ENCODE measurements at regions of chr3 and their contacts with region 1.

Region 1: DNA sequence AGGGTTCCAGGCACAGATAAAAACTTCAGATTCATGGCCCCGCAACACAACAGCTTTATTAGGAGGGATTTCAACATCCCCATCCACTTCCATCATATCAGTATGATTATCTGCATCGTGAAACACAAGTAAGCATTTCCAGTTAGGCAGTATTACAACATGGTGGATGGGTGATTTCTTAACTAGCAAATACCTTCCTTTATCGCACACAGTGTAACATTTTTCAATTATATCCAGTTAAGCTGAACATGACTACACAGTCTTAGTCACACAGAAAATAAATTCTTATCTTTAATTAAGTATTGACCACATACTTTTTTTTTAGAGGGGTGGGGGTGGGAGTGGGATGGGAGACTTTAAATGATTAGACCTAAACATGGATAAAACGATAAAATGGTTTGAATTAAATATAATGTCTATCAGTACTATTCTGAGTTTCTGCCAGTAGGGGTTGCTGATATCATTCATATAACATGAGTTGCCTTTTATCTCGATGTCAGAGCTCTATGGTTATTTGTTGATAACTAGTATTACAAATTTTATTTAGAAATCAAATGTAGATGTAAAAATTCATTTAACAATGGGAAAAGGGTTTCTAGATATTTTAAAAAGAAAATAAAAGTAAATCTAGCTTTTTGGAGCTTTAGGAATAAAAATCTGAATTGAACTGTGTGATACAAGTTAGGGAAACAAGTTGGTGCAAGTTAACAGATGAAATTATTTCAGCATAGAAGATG is 146.6 kb downstream of the TBL1XR1 start:
- DNase-seq: peak in 2 of 9 experiments; percentile 64 to 75
- ATAC-seq: peak; percentile 86
- H3K4me3 ChIP-seq: no peak overlapping the region
- H3K4me3 Mint-ChIP-seq: no peak overlapping the region
- H3K27ac ChIP-seq: no peak overlapping the region
- H3K27ac Mint-ChIP-seq: no peak overlapping the region
- H3K4me1 ChIP-seq: peaks cover 3% of the 10 kb centered on the region
- H3K4me1 Mint-ChIP-seq: peaks cover 20% of the 10 kb centered on the region
- H3K27me3 ChIP-seq: no peaks in the 10 kb centered on the region
- H3K27me3 Mint-ChIP-seq: no peaks in the 10 kb centered on the region
- CTCF ChIP-seq: peak; percentile 95

Region 2: DNA sequence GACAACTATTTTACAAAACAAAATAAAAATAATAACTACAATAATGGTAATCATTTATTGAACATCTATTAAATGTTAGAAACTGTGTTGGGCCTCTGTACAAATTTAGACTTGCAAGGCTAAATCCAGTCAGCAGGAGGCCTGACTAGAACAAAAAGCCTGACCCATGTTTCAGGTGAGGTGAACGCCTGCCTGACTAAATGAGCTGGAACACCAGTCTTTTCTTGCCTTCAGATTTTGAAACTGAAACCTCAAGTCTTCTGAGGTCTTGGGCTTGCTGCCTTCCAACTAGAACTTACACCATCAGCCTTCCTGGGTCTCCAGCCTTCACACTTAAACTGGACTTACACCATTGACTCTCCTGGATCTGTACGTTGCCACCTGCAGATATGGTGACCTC is 560.3 kb before region 1 on chr3:
- CTCF ChIA-PET with region 1: no interaction called
- POLR2A ChIA-PET with region 1: no interaction called
- intact Hi-C with region 1: no loop called
- DNase-seq: no peak
- ATAC-seq: no peak
- H3K4me3 ChIP-seq: no peak overlapping the region
- H3K4me3 Mint-ChIP-seq: no peak overlapping the region
- H3K27ac ChIP-seq: no peak overlapping the region
- H3K27ac Mint-ChIP-seq: no peak overlapping the region
- H3K4me1 ChIP-seq: no peaks in the 10 kb centered on the region
- H3K4me1 Mint-ChIP-seq: no peaks in the 10 kb centered on the region
- H3K27me3 ChIP-seq: no peaks in the 10 kb centered on the region
- H3K27me3 Mint-ChIP-seq: no peaks in the 10 kb centered on the region
- CTCF ChIP-seq: no peak

Region 3: DNA sequence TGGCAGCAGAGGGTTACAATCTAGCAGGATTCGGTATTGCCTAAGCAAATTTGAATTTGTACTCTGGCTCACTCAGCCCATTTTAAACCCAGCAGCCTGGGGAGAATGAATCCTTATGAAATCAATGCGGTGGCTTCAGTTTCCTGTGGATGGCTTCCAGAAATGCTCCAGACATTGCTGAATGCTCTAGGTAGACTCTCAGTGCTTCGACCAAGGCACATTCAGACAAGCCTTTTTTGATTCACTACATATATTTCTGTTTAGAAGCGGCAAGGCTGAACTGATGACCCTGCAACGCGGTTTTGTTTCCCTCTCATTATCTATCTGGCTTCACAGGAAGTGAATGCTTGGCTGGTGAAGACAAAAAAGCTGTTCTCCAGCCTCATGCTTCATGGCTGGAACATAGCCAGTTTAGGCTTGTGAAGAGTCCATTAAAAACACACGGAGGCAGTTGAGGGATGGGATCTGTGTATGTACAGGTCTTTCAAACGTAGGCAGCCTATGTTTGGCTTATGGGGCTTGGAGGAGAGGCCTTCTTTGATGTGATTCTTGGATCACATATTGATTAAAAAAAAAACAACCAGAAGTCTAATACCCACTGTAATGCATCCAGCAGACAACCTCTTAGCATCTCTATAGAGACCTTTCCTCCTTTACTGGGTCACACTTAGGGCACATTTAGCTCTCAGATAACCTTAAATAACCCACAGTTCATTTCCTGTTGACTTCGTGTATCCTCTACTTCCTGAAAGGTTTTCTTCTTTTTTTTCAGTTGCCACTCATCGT is 546.8 kb after region 1 on chr3:
- CTCF ChIA-PET with region 1: no interaction called
- POLR2A ChIA-PET with region 1: no interaction called
- intact Hi-C with region 1: loop called in 1 of 2 experiments (anchors 5 kb)
- DNase-seq: peak in 7 of 9 experiments; percentile 13 to 77 (median 26)
- ATAC-seq: peak; percentile 87
- H3K4me3 ChIP-seq: peak overlapping the region; percentile 0 to 8
- H3K4me3 Mint-ChIP-seq: peak overlapping the region; percentile 76
- H3K27ac ChIP-seq: peak overlapping the region; percentile 44 to 82
- H3K27ac Mint-ChIP-seq: peak overlapping the region; percentile 95
- H3K4me1 ChIP-seq: peaks cover 52% of the 10 kb centered on the region
- H3K4me1 Mint-ChIP-seq: peaks cover 84% of the 10 kb centered on the region
- H3K27me3 ChIP-seq: no peaks in the 10 kb centered on the region
- H3K27me3 Mint-ChIP-seq: no peaks in the 10 kb centered on the region
- CTCF ChIP-seq: no peak

Region 4: DNA sequence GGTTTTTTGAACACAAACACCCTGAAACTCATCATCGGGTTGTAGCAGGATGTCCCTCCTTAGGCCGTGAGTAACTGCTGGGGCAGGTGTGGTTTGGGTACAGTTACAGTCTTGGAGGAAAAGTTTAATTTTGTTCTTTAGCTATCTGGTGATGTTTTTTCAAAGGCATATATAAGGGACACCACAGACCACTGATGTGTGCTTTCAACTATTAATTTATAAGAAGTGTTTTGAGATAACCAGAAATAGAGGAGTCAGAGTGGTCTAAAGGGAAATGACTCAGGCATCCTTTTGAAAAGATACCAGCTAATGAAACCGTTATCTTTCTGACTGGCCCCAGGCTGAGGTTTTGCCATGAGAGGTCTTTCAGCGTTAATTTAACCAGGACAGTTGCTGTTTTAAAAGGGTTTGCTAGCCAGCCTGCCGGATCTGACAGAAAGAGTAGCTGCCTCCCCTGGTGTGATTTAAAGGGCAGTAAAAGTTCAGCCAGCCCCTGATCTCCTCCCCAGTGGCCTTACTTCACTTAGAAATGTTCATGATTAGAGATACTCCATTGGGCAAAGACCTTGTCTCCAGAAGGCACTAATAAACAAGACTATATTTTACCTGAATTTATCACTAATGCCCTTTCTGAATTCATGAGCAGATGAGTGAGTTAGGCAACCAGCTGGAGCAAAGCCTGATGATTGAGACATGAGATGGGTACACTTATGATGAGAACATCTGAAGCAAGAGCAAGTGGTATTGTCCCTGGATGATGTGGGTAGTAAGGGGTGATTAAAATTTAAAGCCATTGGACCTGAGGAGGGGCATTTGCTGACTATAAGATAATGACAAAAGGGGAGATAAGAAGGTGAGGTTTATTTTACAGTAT is 629.1 kb after region 1 on chr3:
- CTCF ChIA-PET with region 1: no interaction called
- POLR2A ChIA-PET with region 1: no interaction called
- intact Hi-C with region 1: loop called in 1 of 2 experiments (anchors 10 kb)
- DNase-seq: peak in 4 of 9 experiments; percentile 7 to 48 (median 23)
- ATAC-seq: peak; percentile 26
- H3K4me3 ChIP-seq: no peak overlapping the region
- H3K4me3 Mint-ChIP-seq: no peak overlapping the region
- H3K27ac ChIP-seq: peak overlapping the region in 1 of 2 experiments; percentile 60
- H3K27ac Mint-ChIP-seq: peak overlapping the region; percentile 47
- H3K4me1 ChIP-seq: peaks cover 3% of the 10 kb centered on the region
- H3K4me1 Mint-ChIP-seq: peaks cover 32% of the 10 kb centered on the region
- H3K27me3 ChIP-seq: no peaks in the 10 kb centered on the region
- H3K27me3 Mint-ChIP-seq: no peaks in the 10 kb centered on the region
- CTCF ChIP-seq: no peak

Region 5: GRCh38 chr3:178155521-178155920 is 1104.9 kb after region 1 on chr3:
- CTCF ChIA-PET with region 1: interaction called, 4 read pairs
- POLR2A ChIA-PET with region 1: no interaction called
- intact Hi-C with region 1: loop called (anchors 5 to 10 kb)
- DNase-seq: peak in 3 of 9 experiments; percentile 2 to 18 (median 7)
- ATAC-seq: no peak
- H3K4me3 ChIP-seq: no peak overlapping the region
- H3K4me3 Mint-ChIP-seq: no peak overlapping the region
- H3K27ac ChIP-seq: no peak overlapping the region
- H3K27ac Mint-ChIP-seq: no peak overlapping the region
- H3K4me1 ChIP-seq: no peaks in the 10 kb centered on the region
- H3K4me1 Mint-ChIP-seq: no peaks in the 10 kb centered on the region
- H3K27me3 ChIP-seq: no peaks in the 10 kb centered on the region
- H3K27me3 Mint-ChIP-seq: no peaks in the 10 kb centered on the region
- CTCF ChIP-seq: no peak

Region 6: GRCh38 chr3:178385280-178385952 is 1334.7 kb after region 1 on chr3:
- CTCF ChIA-PET with region 1: interaction called, 12 read pairs
- POLR2A ChIA-PET with region 1: no interaction called
- intact Hi-C with region 1: loop called (anchors 1 kb)
- DNase-seq: peak in 3 of 9 experiments; percentile 16 to 51 (median 39)
- ATAC-seq: peak; percentile 40
- H3K4me3 ChIP-seq: no peak overlapping the region
- H3K4me3 Mint-ChIP-seq: no peak overlapping the region
- H3K27ac ChIP-seq: no peak overlapping the region
- H3K27ac Mint-ChIP-seq: no peak overlapping the region
- H3K4me1 ChIP-seq: no peaks in the 10 kb centered on the region
- H3K4me1 Mint-ChIP-seq: no peaks in the 10 kb centered on the region
- H3K27me3 ChIP-seq: no peaks in the 10 kb centered on the region
- H3K27me3 Mint-ChIP-seq: peaks cover under 1% of the 10 kb centered on the region
- CTCF ChIP-seq: peak; percentile 82

Measured in CD8-positive, alpha-beta T cell (primary cell).